MCF 10A (cell line): ENCODE measurements at regions of chr4 and their contacts with region 1.

Region 1: DNA sequence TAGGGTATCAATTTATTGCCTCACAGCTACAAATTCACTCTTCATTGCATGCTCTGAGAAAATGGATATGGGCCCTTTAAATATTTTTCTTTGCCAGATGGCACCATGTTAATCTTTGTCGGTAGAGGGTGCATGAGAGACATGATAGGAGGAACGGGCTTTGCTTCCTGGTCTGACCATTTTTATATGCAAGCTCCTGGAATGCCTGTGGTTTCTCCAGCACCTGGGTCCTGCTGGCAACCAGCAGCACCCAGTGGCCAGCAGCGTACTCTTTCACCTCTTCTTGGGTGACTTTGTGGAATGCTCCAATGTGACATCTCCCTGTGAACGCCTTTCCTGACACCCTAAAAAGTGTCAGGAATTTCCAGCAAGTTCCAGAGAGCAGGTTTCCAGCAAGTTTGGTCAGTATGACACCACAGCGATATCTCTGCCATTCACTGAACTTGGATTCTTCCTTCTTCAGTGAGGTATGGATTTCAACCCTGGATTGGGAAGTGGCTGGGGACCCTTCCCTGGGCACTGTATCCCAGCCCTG is 140.3 kb upstream of the PGRMC2 start:
- DNase-seq: peak; percentile 88
- H3K4me3 Mint-ChIP-seq: peak overlapping the region; percentile 47
- H3K27ac Mint-ChIP-seq: no peak overlapping the region
- H3K4me1 Mint-ChIP-seq: peaks cover 22% of the 10 kb centered on the region
- H3K27me3 Mint-ChIP-seq: no peaks in the 10 kb centered on the region
- CTCF ChIP-seq: peak; percentile 42

Region 2: GRCh38 chr4:128191115-128191781 is 236.7 kb before region 1 on chr4:
- CTCF ChIA-PET with region 1: interaction called, 15 read pairs
- POLR2A ChIA-PET with region 1: interaction called, 3 read pairs
- intact Hi-C with region 1: loop called (anchors 1 kb)
- DNase-seq: peak; percentile 81
- H3K4me3 Mint-ChIP-seq: no peak overlapping the region
- H3K27ac Mint-ChIP-seq: no peak overlapping the region
- H3K4me1 Mint-ChIP-seq: peaks cover 6% of the 10 kb centered on the region
- H3K27me3 Mint-ChIP-seq: no peaks in the 10 kb centered on the region
- CTCF ChIP-seq: peak; percentile 77

Region 3: DNA sequence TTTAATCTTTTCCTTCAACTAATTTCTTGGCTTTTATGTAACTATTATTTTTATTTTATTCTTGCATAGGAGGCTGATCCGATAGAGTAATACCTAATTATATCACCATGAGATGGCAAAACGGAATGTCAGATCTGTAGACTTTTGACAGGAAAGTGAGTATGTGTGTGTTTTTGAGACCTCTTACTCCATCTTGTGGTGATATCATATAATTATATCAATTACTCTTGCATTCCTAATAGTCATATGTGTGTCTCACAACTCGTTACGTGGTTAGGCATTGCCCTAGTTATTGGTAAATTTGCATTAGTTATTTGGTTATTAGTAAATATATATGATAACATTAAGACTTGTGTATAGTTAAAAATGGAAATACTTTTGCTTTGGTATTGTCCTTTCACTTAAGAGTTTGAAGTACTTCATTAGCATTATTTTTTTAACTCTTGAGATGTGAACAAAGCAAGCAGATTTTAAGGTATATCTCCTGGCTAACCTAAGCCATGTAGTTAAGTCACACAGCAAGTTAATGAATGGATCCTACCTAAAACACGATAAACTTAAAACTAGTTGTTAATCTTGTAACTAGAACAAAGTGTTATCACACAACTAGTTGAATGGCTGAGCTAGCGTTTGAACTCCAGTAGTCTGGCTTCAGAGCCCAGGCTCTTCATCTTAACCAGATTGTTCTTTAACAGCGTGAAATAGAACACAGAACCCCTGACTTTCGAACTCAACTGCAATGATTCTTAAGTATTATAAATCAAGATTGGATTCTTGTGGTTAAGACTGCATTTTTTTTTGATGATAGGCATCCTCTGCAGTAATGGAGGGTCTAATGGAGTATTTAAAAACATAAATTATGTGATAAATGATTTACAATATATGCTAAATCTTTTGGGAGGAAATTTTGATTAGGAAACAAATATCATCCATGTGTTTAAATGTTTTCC is 207.3 kb before region 1 on chr4:
- CTCF ChIA-PET with region 1: interaction called, 5 read pairs
- POLR2A ChIA-PET with region 1: no interaction called
- intact Hi-C with region 1: loop called (anchors 10 kb)
- DNase-seq: peak; percentile 59
- H3K4me3 Mint-ChIP-seq: no peak overlapping the region
- H3K27ac Mint-ChIP-seq: no peak overlapping the region
- H3K4me1 Mint-ChIP-seq: no peaks in the 10 kb centered on the region
- H3K27me3 Mint-ChIP-seq: no peaks in the 10 kb centered on the region
- CTCF ChIP-seq: peak; percentile 29

Region 4: DNA sequence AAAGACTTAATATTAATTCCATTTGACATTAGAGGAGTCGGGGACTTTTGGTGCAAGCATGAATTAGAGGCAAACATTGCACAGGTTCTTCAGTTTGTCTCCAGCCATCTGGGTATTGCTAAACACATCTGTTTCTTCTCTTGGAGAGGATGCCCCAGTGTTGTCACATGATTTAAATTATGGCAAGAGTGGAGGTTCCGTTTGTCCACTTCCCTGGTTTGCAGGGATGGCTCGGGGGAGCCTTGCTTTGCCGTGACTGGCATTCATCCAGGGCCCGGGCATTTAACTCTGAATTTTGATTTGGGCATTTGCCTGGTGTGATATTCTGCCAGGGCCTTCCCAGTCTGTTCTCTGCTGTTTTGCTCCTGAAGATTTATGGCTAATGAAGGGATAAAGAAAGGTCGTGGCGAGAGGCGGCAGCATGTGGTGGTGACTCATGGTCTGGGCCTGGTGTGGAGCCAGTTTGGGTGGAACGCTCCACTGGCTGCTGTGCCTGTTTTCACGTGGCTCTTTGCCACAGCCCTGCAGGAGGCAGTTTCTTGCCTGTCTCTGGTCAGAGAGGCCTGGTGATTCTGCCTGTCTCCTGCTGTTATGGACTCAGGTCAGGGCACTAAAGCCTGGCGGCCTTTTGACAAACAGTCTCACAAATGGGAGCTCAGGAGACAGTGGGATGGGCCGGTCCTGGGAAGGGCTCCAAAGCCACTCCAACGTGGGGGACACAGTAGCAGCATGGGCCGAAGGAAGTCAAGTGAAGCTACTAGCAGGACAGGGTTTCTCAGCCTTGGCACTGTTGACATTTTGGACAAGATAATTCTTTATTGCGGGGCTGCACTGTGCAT is 40.9 kb before region 1 on chr4:
- CTCF ChIA-PET with region 1: interaction called, 11 read pairs
- POLR2A ChIA-PET with region 1: interaction called, 45 read pairs
- intact Hi-C with region 1: no loop called
- DNase-seq: peak; percentile 94
- H3K4me3 Mint-ChIP-seq: peak overlapping the region; percentile 52
- H3K27ac Mint-ChIP-seq: peak overlapping the region; percentile 84
- H3K4me1 Mint-ChIP-seq: peaks cover 45% of the 10 kb centered on the region
- H3K27me3 Mint-ChIP-seq: no peaks in the 10 kb centered on the region
- CTCF ChIP-seq: no peak

Region 5: GRCh38 chr4:128393101-128393704 is 34.7 kb before region 1 on chr4:
- CTCF ChIA-PET with region 1: interaction called, 11 read pairs
- POLR2A ChIA-PET with region 1: interaction called, 45 read pairs
- intact Hi-C with region 1: no loop called
- DNase-seq: no peak
- H3K4me3 Mint-ChIP-seq: no peak overlapping the region
- H3K27ac Mint-ChIP-seq: no peak overlapping the region
- H3K4me1 Mint-ChIP-seq: peaks cover 25% of the 10 kb centered on the region
- H3K27me3 Mint-ChIP-seq: no peaks in the 10 kb centered on the region
- CTCF ChIP-seq: no peak

Region 6: DNA sequence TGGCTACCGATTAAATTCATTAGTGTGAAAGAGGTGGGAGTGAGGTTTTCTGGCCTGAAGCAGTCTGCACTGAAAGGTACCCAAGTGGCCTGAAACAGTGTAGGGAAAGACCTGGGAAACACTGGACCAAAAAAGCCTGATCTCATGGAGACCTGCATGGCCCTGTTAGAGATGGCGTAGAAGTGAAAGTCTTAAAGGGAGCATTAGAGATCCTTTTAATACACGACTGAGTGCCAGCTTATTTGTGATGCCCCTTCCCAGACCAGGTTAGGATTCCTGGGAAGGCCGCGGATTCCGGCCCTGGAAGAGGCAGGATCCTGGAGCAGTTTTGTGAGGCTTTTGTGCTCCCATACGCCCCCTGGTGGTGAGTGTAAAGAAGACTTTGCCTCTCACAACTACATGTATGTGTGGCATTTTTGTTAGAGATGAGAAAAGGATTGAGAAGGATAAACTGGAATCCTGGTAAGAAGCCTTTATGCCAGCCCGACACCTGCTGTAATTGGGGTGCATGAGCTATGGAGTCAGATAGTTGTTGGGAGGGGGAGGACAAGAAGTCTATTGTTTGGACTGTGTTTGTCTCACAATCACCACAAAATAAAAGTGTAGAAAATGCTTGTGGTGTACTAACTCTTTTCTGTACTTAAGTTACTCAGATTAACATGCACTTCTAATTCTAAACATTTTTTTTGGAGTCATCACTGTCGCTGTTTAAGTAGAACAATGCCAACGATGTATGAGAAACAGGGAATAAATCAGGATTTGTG is 435.6 kb after region 1 on chr4:
- CTCF ChIA-PET with region 1: interaction called, 7 read pairs
- POLR2A ChIA-PET with region 1: no interaction called
- intact Hi-C with region 1: loop called (anchors 1 kb)
- DNase-seq: peak; percentile 89
- H3K4me3 Mint-ChIP-seq: no peak overlapping the region
- H3K27ac Mint-ChIP-seq: peak overlapping the region; percentile 47
- H3K4me1 Mint-ChIP-seq: peaks cover 3% of the 10 kb centered on the region
- H3K27me3 Mint-ChIP-seq: no peaks in the 10 kb centered on the region
- CTCF ChIP-seq: peak; percentile 63